PC-3 (cell line): ENCODE measurements at regions of chr9 and their contacts with region 1.

Region 1: GRCh38 chr9:134135343-134136118 is at the start of gene WDR5:
- DNase-seq: peak; percentile 83
- ATAC-seq: peak; percentile 72
- H3K4me3 ChIP-seq: peak within 1 kb of the TSS; percentile 98
- H3K27ac ChIP-seq: peak within 1 kb of the TSS; percentile 31
- H3K4me1 ChIP-seq: peaks cover 25% of the 10 kb centered on the region
- H3K27me3 ChIP-seq: no peaks in the 10 kb centered on the region
- CTCF ChIP-seq: 0 out of 2 replicates have a peak, but pooled peaks have one; percentile 20
- total RNA-seq, gene WDR5: 29.1 and 35.7 TPM in 2 replicates

Region 2: DNA sequence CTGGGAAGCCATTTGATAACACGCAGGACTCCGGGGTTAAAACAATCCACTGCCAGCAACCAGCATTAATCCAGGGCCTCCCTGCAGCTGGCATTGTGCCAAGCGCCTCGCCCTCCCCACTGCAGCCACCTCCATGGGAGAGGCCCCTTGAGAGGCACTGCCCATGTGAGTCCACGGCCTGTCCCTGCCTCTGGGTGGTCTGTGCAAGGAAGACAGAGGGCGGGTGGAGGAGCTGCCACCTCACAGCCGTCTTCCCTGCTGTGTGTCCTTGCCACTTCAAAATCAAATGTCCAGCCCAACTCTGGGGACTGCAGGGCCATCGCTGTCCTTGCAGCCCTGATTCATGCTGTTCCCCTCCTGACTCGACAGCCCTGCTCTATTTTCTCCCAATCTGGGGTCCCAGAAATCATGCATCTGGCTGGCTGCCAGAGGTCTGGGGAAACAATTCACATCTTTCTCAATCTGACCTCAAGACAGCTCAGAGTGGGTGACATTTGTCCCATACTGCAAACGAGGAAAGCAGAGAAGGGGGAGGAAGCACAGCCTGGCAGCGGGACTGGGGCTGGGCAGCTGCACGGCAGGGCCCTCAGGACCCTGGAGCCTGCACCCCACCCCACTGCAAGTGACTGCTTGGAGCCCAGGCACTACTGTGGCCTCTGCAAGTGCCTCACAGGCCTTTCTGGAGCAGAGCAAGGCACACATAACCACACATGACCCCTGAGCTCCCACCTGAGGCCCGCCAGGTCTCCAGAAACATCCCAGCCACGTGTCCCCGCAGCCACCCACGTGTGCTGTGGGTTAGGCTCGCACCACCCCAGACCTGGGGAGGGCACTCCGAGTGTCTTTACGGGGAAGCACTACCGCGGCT is 94.5 kb before region 1 on chr9:
- CTCF ChIA-PET with region 1: no interaction called
- POLR2A ChIA-PET with region 1: no interaction called
- intact Hi-C with region 1: no loop called
- DNase-seq: no peak
- ATAC-seq: no peak
- H3K4me3 ChIP-seq: no peak overlapping the region
- H3K27ac ChIP-seq: no peak overlapping the region
- H3K4me1 ChIP-seq: no peaks in the 10 kb centered on the region
- H3K27me3 ChIP-seq: no peaks in the 10 kb centered on the region
- CTCF ChIP-seq: no peak

Region 3: GRCh38 chr9:134067904-134068743 is 67.4 kb before region 1 on chr9 and contains the start of gene BRD3:
- CTCF ChIA-PET with region 1: no interaction called
- POLR2A ChIA-PET with region 1: no interaction called
- intact Hi-C with region 1: loop called (anchors 5 kb)
- DNase-seq: peak; percentile 85
- ATAC-seq: peak; percentile 86
- H3K4me3 ChIP-seq: peak within 1 kb of the TSS; percentile 89
- H3K27ac ChIP-seq: no peak within 1 kb of the TSS
- H3K4me1 ChIP-seq: peaks cover 9% of the 10 kb centered on the region; the same call in 1 of the 2 replicates
- H3K27me3 ChIP-seq: no peaks in the 10 kb centered on the region; the same call in 1 of the 2 replicates
- CTCF ChIP-seq: no peak
- total RNA-seq, gene BRD3: 4.4 and 5.5 TPM in 2 replicates

Region 4: GRCh38 chr9:134111064-134111463 is 24.5 kb before region 1 on chr9:
- CTCF ChIA-PET with region 1: no interaction called
- POLR2A ChIA-PET with region 1: no interaction called
- intact Hi-C with region 1: no loop called
- DNase-seq: no peak
- ATAC-seq: no peak
- H3K4me3 ChIP-seq: no peak overlapping the region
- H3K27ac ChIP-seq: no peak overlapping the region
- H3K4me1 ChIP-seq: no peaks in the 10 kb centered on the region
- H3K27me3 ChIP-seq: no peaks in the 10 kb centered on the region
- CTCF ChIP-seq: no peak

Region 5: GRCh38 chr9:134544388-134545214 is 409.1 kb after region 1 on chr9:
- CTCF ChIA-PET with region 1: no interaction called
- POLR2A ChIA-PET with region 1: no interaction called
- intact Hi-C with region 1: no loop called
- DNase-seq: peak; percentile 35
- ATAC-seq: no peak
- H3K4me3 ChIP-seq: no peak overlapping the region
- H3K27ac ChIP-seq: no peak overlapping the region
- H3K4me1 ChIP-seq: no peaks in the 10 kb centered on the region
- H3K27me3 ChIP-seq: no peaks in the 10 kb centered on the region
- CTCF ChIP-seq: no peak